ENCODE measurements at regions of chr2 and their contacts with region 1.

Region 1: GRCh38 chr2:222318026-222318711 is 19.4 kb upstream of the PAX3 start:
- DNase-seq: no peak
- H3K4me3 ChIP-seq: peak overlapping the region; percentile 45
- H3K27me3 ChIP-seq: peaks cover 22% of the 10 kb centered on the region
- CTCF ChIP-seq: peak; percentile 57

Region 2: GRCh38 chr2:222332116-222332515 is 13.9 kb after region 1 on chr2:
- CTCF ChIA-PET with region 1: no interaction called
- POLR2A ChIA-PET with region 1: no interaction called
- DNase-seq: no peak
- H3K4me3 ChIP-seq: no peak overlapping the region
- H3K27me3 ChIP-seq: no peaks in the 10 kb centered on the region
- CTCF ChIP-seq: no peak

Region 3: DNA sequence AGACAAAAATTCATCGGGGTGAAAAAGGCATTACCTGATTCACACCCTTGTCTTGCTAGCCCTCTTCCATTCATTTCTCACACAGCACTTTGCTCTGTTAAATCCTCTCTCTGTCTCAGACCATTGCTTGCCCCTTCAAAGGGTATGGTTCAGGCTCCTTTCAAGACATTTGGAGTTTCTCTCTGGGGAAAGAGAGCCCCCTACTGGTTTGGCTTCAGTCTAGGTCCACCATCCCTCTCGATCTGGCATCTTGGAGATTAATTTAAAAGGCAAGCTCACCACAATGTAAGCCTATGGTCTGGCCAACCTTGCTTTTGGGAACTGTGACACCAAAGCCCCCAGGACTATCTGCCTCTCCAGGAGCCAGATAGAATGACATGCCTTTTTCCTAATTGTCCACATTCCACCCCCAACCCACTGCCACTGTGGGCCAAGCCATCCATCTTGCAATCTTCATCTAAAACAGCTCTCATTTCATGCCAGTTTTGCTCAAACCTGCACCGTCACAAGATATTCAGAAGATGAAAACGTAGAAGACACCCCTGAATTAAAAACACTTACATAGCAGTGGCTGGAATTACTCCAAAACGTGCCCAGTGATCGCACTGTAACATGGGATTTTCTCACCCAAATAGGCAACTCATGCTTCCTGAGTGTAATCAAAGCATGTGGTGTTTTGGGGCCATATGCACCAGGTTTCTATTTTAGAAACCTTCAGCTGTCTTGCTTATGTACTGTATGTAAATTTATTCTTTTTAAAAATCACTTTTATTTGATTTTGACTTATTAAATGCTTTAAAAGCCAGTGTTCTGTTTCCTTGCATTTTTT is 243.9 kb after region 1 on chr2:
- CTCF ChIA-PET with region 1: interaction called, 21 read pairs
- POLR2A ChIA-PET with region 1: no interaction called
- DNase-seq: no peak
- H3K4me3 ChIP-seq: no peak overlapping the region
- H3K27me3 ChIP-seq: no peaks in the 10 kb centered on the region
- CTCF ChIP-seq: peak; percentile 72

Region 4: DNA sequence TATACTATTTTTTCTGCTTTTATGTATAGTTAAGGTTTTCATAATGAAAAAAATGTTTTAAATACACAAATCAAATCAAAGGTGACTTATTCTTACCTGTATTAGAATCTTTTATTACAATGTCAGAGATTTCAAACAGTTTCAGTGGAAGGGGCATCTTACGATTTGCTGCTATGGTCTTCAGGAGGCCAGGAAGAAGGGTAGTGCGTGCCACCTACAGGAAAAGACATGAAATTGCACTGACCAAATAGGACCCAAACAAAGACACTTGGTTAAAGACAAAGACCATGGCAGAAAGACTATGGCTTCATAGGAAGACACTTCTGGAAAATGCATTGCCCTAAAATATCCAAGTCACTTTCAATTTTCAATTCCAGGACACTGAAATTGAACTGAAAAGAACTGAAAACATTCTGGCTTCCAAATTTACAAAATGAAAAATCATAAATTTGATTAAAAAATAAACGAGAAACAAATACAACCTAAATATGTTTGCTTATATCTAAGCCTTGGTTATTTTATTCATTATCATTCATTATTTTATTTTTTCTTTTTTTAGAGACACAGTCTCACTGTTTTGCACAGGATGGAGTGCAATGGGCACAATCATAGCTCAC is 295.7 kb after region 1 on chr2:
- CTCF ChIA-PET with region 1: interaction called, 18 read pairs
- POLR2A ChIA-PET with region 1: no interaction called
- DNase-seq: no peak
- H3K4me3 ChIP-seq: no peak overlapping the region
- H3K27me3 ChIP-seq: no peaks in the 10 kb centered on the region
- CTCF ChIP-seq: peak; percentile 83

Measured in BJ (cell line).